B cell (primary cell): ENCODE measurements at regions of chr17 and their contacts with region 1.

Region 1: GRCh38 chr17:7204828-7205461 is 14.7 kb downstream of the DLG4 start:
- DNase-seq: peak; percentile 99
- ATAC-seq: peak; percentile 85
- H3K4me3 ChIP-seq: peak overlapping the region in 4 of 5 experiments; percentile 49 to 65 (median 55)
- H3K4me3 Mint-ChIP-seq: peak overlapping the region; percentile 82
- H3K27ac ChIP-seq: peak overlapping the region; percentile 86 to 93
- H3K27ac Mint-ChIP-seq: peak overlapping the region; percentile 91
- H3K4me1 ChIP-seq: peaks cover 17 to 25% of the 10 kb centered on the region in 2 donors
- H3K4me1 Mint-ChIP-seq: peaks cover 28% of the 10 kb centered on the region
- H3K27me3 ChIP-seq: no peaks in the 10 kb centered on the region
- H3K27me3 Mint-ChIP-seq: peaks cover under 1% of the 10 kb centered on the region
- CTCF ChIP-seq: no peak

Region 2: DNA sequence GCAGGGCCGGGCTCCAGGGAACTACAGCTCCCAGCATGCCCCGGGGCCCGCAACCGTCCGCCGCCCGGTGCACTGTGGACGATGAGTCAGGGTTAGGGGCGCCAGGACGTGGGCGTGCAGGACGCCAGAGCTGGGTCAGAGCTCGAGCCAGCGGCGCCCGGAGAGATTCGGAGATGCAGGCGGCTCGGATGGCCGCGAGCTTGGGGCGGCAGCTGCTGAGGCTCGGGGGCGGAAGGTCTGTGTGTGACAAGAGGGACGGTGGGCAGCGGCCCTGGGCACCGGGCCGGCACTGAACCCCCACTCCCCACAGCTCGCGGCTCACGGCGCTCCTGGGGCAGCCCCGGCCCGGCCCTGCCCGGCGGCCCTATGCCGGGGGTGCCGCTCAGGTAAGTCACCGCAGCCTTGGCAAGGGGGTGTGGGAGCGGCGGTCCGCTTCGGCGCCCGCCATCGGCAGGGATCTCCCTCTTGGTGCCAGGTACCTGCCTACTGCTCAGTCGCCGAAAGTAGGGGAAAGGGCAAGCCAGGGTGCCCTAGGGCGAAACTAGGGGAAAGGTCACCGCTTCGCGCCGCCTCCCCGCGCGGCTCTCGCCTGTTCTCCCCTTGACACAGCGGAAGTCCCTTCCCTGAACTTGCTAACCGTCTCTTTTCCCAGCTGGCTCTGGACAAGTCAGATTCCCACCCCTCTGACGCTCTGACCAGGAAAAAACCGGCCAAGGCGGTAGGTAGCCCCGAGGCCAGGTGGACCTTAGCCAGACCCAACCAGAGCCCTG is 15.1 kb after region 1 on chr17 and contains the starts of genes ACADVL and DLG4:
- CTCF ChIA-PET with region 1: interaction called, 4 read pairs
- POLR2A ChIA-PET with region 1: interaction called, 8 read pairs
- intact Hi-C with region 1: loop called (anchors 2 kb)
- DNase-seq: peak; percentile 78
- ATAC-seq: peak; percentile 76
- H3K4me3 ChIP-seq: peak within 1 kb of the TSS; percentile 31 to 86 (median 80)
- H3K4me3 Mint-ChIP-seq: peak within 1 kb of the TSS; percentile 97
- H3K27ac ChIP-seq: peak within 1 kb of the TSS; percentile 42 to 78
- H3K27ac Mint-ChIP-seq: peak within 1 kb of the TSS; percentile 93
- H3K4me1 ChIP-seq: peaks cover 20 to 47% of the 10 kb centered on the region in 2 donors
- H3K4me1 Mint-ChIP-seq: peaks cover 48% of the 10 kb centered on the region
- H3K27me3 ChIP-seq: no peaks in the 10 kb centered on the region
- H3K27me3 Mint-ChIP-seq: no peaks in the 10 kb centered on the region
- CTCF ChIP-seq: no peak
- total RNA-seq, gene ACADVL: 640 and 655 TPM in 2 replicates
- total RNA-seq, gene DLG4: 12.0 and 12.5 TPM in 2 replicates

Region 3: GRCh38 chr17:7252176-7253043 is 47.5 kb after region 1 on chr17 and contains the start of gene ELP5:
- CTCF ChIA-PET with region 1: interaction called, 3 read pairs
- POLR2A ChIA-PET with region 1: no interaction called
- intact Hi-C with region 1: loop called (anchors 1 kb)
- DNase-seq: peak; percentile 100
- ATAC-seq: peak; percentile 64
- H3K4me3 ChIP-seq: peak within 1 kb of the TSS; percentile 69 to 90 (median 78)
- H3K4me3 Mint-ChIP-seq: peak within 1 kb of the TSS; percentile 98
- H3K27ac ChIP-seq: peak within 1 kb of the TSS; percentile 98 to 100
- H3K27ac Mint-ChIP-seq: peak within 1 kb of the TSS; percentile 100
- H3K4me1 ChIP-seq: peaks cover 30 to 33% of the 10 kb centered on the region in 2 donors
- H3K4me1 Mint-ChIP-seq: peaks cover 44% of the 10 kb centered on the region
- H3K27me3 ChIP-seq: no peaks in the 10 kb centered on the region
- H3K27me3 Mint-ChIP-seq: no peaks in the 10 kb centered on the region
- CTCF ChIP-seq: no peak
- total RNA-seq, gene ELP5: 42.2 and 48.0 TPM in 2 replicates